G401 (cell line): ENCODE measurements at regions of chr7 and their contacts with region 1.

Region 1: DNA sequence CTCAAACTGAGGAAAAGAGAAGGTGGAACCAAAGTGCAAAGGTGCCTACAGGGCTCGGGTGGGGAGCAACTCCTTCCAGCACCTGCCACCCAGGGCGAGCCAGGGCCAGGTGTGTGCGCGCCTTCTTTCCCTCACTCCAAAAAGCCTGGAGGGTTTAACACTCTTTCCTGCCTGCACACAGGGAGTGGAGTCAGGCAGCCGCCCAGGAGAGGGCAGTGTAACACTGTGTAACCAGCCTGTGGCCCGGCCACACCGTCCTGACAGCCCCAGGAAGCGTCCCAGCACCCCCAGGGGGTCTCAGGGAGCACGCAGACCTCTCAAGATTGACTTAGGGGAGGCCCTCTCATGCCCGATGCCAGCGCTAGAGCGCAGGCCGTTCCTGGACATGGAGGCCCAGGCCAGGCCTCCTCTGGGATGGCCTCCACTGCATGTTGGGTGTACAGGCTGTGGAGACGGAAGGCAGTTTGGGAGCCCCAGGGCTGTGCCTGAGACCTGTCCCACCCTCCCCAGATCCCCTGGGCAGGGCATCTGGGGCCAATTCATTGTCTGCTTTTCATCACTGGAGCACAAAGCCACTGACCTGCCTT is 13.4 kb downstream of the BRI3 start:
- DNase-seq: peak; percentile 43

Region 2: DNA sequence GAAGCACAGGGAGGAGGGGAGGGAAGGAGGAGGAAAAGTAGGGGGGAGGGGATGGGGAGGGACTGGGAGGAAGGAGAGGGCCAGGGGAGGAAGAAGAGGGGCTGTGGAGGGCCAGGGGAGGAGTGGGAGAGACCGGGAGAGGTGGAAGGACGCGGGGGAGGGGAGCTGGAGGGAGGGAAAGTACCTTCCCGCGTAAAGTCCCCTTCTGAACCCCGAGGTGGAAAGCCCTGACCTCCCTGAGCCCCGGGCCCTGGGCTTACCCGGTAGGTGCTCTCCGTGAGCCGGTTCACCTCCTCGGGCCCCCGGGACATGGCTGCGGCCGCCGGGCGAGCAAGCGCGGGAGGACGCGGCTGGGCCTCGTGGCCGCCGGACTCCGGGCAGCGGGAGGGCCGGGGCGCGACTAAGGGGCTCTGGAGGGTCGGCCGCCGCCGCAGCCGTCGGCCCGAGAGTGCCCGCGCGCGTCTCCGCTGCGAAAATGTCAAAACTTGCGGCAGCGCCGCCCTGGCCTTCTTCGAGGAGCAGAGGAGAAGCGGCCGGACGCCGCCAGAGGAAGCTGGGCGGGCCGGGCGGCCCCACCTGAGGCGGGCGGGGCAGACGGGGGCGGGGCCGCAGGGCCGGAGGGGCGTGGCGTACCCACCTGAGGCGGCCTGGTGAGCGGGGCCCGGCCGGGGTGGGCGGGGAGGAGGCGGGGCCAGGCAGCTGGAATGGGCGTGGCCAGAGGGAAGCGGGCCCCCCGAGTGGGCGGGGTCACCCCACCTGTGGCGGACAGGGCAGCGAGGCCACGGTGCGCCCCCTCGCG is 105.9 kb after region 1 on chr7 and contains the start of gene BAIAP2L1:
- in situ Hi-C with region 1: loop called (anchors 5 kb)
- DNase-seq: peak; percentile 40
- total RNA-seq, gene BAIAP2L1: 18.8 and 23.3 TPM in 2 replicates